ENCODE measurements at regions of chr19 and their contacts with region 1.

Region 1: DNA sequence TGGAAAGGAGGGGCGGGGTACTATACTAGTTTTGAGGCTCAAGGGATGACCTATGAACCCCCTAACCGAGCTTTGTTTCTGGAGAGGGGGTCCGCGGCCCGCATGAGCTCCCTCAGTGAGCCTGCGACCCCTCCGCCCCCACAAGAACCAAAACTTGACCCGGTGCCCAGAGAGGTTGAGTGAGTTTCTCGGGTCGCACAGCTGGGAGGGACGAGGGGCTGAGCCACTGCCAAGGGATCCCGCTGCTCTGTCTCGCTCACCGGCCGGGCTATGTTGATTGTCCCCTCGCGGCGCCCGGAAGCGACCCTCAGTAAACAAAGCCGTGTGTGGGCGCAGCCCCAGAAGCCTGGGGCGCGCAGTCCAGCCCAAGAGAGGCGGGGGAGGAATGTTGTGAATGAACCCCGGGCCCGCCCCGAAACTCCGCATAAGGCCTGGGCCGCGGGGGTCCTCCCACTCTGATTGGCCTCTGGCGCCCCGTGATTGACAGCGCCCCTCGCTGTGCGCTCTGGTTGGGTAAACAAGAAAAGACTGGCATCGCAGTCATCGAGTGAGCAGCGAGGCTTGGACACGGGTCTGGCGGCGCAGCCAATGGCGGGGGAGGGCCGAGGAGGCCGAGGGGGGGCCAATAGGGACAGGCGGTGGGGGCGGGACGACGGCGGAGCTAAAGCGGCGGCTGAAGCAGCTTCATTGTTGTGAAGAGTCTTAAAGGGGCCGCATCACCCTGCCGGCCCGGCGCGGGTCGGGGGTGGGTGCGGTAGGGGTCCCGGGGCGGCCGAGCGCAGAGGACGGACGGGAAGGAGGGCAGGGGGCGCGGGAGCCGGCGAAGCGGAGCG is at the start of gene ZSWIM4:
- DNase-seq: peak; percentile 97 to 99
- H3K4me3 ChIP-seq: peak within 1 kb of the TSS; percentile 59 to 81 (median 64)
- H3K27ac ChIP-seq: peak within 1 kb of the TSS; percentile 92
- H3K4me1 ChIP-seq: peaks cover 0 to 7% (median 4%) of the 10 kb centered on the region in 4 experiments; a peak in 4 of 7 replicates
- H3K27me3 ChIP-seq: no peaks in the 10 kb centered on the region
- CTCF ChIP-seq: no peak
- EP300 ChIP-seq: peak; percentile 33 to 96
- POLR2A ChIP-seq: peak; percentile 79 to 80
- RAD21 ChIP-seq: no peak; a peak in 1 of 4 replicates
- total RNA-seq, gene ZSWIM4: 31.1 and 32.7 TPM in 2 replicates

Region 2: DNA sequence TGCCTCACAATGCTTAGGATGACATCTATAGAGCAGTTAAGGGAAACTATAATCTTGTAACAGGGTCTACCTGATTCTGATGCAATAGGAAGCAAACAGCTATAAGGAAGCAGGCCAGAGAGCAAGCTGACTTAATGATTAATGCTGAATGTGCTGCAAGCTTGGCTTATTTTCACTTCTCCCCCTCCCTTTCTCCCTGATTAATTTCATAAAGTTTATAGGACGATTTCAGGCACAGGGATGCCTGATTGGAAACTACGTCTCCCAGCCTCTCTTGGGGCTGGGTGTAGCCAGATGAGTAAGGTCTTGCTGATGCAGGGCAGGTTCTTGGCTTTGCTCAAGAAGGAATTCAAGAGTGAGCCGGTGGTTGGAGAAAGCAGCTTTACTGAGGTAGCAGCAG is 113.5 kb before region 1 on chr19:
- CTCF ChIA-PET with region 1: no interaction called
- POLR2A ChIA-PET with region 1: no interaction called
- DNase-seq: no peak
- H3K4me3 ChIP-seq: no peak overlapping the region
- H3K27ac ChIP-seq: no peak overlapping the region
- H3K4me1 ChIP-seq: no peaks in the 10 kb centered on the region
- H3K27me3 ChIP-seq: no peaks in the 10 kb centered on the region
- CTCF ChIP-seq: no peak
- EP300 ChIP-seq: no peak
- POLR2A ChIP-seq: no peak
- RAD21 ChIP-seq: no peak

Region 3: GRCh38 chr19:13774217-13775191 is 20.5 kb before region 1 on chr19 and contains the start of gene C19orf53:
- CTCF ChIA-PET with region 1: interaction called, 9 read pairs
- POLR2A ChIA-PET with region 1: interaction called, 41 read pairs
- DNase-seq: peak in 1 of 2 experiments; percentile 85
- H3K4me3 ChIP-seq: peak within 1 kb of the TSS; percentile 81 to 99 (median 92)
- H3K27ac ChIP-seq: peak within 1 kb of the TSS; percentile 92
- H3K4me1 ChIP-seq: peaks cover 0 to 4% (median 1%) of the 10 kb centered on the region in 4 experiments; a peak in 1 of 7 replicates
- H3K27me3 ChIP-seq: no peaks in the 10 kb centered on the region
- CTCF ChIP-seq: no peak
- EP300 ChIP-seq: peak in 1 of 2 experiments; percentile 28; a peak in 1 of 3 replicates
- POLR2A ChIP-seq: peak; percentile 88 to 95
- RAD21 ChIP-seq: no peak
- total RNA-seq, gene C19orf53: 104 and 116 TPM in 2 replicates

Region 4: GRCh38 chr19:13804830-13805683 is 10.1 kb after region 1 on chr19:
- CTCF ChIA-PET with region 1: interaction called, 5 read pairs
- POLR2A ChIA-PET with region 1: interaction called, 10 read pairs
- DNase-seq: peak in 1 of 2 experiments; percentile 82
- H3K4me3 ChIP-seq: no peak overlapping the region
- H3K27ac ChIP-seq: no peak overlapping the region
- H3K4me1 ChIP-seq: no peaks in the 10 kb centered on the region; a peak in 1 of 7 replicates
- H3K27me3 ChIP-seq: no peaks in the 10 kb centered on the region
- CTCF ChIP-seq: peak; percentile 81 to 92 (median 87)
- EP300 ChIP-seq: no peak
- POLR2A ChIP-seq: no peak
- RAD21 ChIP-seq: peak; percentile 59 to 76

Region 5: GRCh38 chr19:13825489-13826391 is 30.8 kb after region 1 on chr19:
- CTCF ChIA-PET with region 1: interaction called, 4 read pairs
- POLR2A ChIA-PET with region 1: interaction called, 55 read pairs
- DNase-seq: peak in 1 of 2 experiments; percentile 91
- H3K4me3 ChIP-seq: no peak overlapping the region
- H3K27ac ChIP-seq: no peak overlapping the region
- H3K4me1 ChIP-seq: peaks cover 0 to 2% (median 0%) of the 10 kb centered on the region in 4 experiments; a peak in 2 of 7 replicates
- H3K27me3 ChIP-seq: no peaks in the 10 kb centered on the region
- CTCF ChIP-seq: peak; percentile 34 to 52 (median 35)
- EP300 ChIP-seq: no peak
- POLR2A ChIP-seq: no peak
- RAD21 ChIP-seq: peak in 1 of 2 experiments; percentile 32; a peak in 2 of 4 replicates

Region 6: DNA sequence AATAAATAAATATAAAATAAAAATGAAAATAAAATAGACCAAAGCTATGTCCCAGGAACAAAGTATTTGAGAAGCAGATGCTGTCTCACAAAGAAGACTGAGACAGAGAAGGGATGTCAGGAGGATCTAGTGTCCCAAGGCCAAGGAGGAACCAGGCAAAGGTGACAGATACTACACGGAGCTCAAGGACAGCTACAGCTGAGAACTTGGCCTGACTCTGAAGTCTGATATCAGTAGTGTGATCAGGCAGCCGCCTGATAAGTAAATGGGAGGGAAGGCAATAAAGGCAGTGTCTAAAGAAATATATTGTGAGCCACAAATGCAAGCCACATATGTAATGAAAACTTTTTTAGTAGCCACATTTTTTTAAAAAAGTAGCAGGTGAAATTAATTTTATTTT is 61.5 kb after region 1 on chr19:
- CTCF ChIA-PET with region 1: interaction called, 24 read pairs
- POLR2A ChIA-PET with region 1: interaction called, 60 read pairs
- DNase-seq: no peak
- H3K4me3 ChIP-seq: no peak overlapping the region
- H3K27ac ChIP-seq: no peak overlapping the region
- H3K4me1 ChIP-seq: peaks cover 0 to 2% (median 2%) of the 10 kb centered on the region in 4 experiments; a peak in 5 of 7 replicates
- H3K27me3 ChIP-seq: no peaks in the 10 kb centered on the region; a peak in 1 of 7 replicates
- CTCF ChIP-seq: no peak
- EP300 ChIP-seq: no peak
- POLR2A ChIP-seq: no peak
- RAD21 ChIP-seq: no peak

Measured in H1 (cell line).